ENCODE measurements at regions of chr1 and their contacts with region 1.

Region 1: DNA sequence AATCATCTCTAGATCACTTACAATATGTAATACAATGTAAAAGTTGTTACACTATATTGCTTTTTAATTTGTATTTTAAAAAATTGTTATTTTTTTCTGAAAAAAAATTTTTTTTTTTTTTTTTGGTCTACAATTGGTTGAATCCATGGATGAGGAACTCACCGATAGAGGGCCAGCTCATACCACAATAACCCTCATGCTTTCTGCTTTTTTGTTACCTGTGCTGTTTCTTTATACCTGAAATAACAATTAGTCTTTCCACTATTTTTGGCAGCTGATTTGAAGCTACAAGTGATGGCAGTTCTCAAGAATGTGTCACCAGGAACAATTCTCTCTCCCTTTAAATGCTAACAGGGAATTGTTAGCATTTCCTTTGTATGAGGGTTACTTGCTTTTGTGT is 12.0 kb downstream of the SMG7 start:
- DNase-seq: no peak
- H3K4me3 ChIP-seq: no peak overlapping the region
- H3K27ac ChIP-seq: no peak overlapping the region
- H3K4me1 ChIP-seq: peaks cover 0 to 9% (median 5%) of the 10 kb centered on the region in 4 experiments; a peak in 4 of 7 replicates
- H3K27me3 ChIP-seq: no peaks in the 10 kb centered on the region
- CTCF ChIP-seq: no peak
- EP300 ChIP-seq: no peak
- POLR2A ChIP-seq: no peak
- RAD21 ChIP-seq: peak; percentile 33 to 36; a peak in 3 of 4 replicates

Region 2: DNA sequence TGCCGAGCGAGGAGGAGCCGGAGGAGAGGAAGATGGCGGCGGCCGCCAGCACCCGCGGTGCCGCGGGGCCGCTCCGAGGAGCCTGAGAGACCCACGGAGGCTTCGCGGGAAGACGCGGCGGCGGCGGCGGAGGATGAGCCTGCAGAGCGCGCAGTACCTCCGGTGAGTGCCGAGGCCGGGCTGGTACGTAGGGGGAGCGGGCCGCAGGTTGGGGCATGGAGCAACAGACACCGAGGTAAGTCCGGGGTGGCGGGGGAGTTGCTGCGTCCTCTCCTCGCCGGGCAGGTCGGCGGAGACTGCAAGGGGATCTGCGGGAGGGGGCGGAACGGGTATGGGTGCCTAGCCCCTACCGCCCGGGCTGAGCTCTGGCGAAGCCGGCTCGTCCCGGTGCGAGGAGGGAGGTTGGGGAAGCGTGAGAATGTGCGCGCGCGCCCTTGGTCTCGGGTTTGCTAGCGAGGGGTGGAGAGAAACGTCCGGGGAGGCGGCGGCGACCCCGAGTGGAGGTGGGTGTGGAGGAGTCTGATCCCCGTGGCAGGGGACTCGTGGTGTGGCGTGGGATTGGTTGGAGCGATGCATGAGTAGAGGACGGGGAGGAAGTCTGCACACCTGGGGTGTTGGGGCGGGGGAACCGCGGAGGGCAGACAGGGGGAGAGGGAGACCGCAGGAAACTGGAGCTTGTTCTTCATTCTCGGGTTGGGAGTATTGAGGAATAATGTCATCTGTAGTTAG is 11.6 kb before region 1 on chr1 and contains the start of gene SMG7:
- CTCF ChIA-PET with region 1: interaction called, 14 read pairs
- POLR2A ChIA-PET with region 1: interaction called, 6 read pairs
- DNase-seq: no peak
- H3K4me3 ChIP-seq: peak within 1 kb of the TSS; percentile 89 to 91 (median 90)
- H3K27ac ChIP-seq: peak within 1 kb of the TSS; percentile 99
- H3K4me1 ChIP-seq: peaks cover 0 to 2% (median 1%) of the 10 kb centered on the region in 4 experiments; a peak in 2 of 7 replicates
- H3K27me3 ChIP-seq: no peaks in the 10 kb centered on the region
- CTCF ChIP-seq: no peak
- EP300 ChIP-seq: no peak
- POLR2A ChIP-seq: peak in 1 of 2 experiments; percentile 57; a peak in 1 of 3 replicates
- RAD21 ChIP-seq: peak in 1 of 2 experiments; percentile 3; a peak in 1 of 4 replicates
- total RNA-seq, gene SMG7: 61.2 and 65.6 TPM in 2 replicates